Activated naive CD4-positive, alpha-beta T cell treated with anti-CD3 and anti-CD28 coated beads for 36 hours (primary cell): ENCODE measurements at regions of chr11 and their contacts with region 1.

Region 1: DNA sequence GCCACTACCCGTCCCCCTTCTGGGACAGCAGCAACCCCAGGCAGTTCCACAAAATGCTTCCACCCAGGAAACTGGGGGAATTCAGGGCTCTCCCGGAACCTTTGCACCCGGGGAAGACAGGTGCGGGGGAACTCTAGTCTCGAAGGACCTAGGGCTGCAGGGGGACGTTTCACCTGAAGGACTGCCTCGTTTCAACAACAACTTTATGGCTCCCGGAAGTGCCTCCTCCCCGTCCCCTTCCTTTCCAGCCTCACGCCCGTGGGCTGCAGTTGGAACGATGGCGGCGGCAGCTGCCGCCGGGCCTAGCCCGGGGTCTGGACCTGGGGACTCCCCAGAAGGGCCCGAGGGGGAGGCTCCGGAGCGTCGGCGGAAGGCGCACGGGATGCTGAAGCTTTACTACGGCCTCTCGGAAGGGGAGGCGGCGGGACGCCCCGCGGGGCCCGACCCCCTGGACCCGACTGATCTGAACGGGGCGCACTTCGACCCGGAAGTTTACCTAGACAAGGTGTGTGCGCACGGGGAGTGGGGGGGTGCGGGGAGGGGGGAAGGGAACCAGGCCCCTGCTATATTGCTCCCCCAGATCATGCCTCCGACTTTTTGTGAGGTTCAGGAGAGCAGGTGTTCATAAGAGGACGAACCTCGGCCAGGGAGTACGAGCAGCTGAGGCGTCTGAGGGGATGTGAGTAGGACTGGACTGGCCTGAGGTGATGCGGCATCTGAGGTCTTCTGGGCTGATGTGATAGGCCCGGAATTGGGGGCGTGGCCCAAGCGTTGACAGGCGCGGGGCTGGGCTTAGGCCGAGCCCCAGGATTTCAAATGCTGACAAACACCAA is at the start of gene VPS51:
- DNase-seq: peak; percentile 90
- H3K4me3 Mint-ChIP-seq: peak within 1 kb of the TSS; percentile 94
- H3K27ac Mint-ChIP-seq: peak within 1 kb of the TSS; percentile 95
- H3K4me1 Mint-ChIP-seq: peaks cover 17% of the 10 kb centered on the region
- H3K27me3 Mint-ChIP-seq: no peaks in the 10 kb centered on the region
- total RNA-seq, gene VPS51: 90.8 to 96.0 TPM

Region 2: DNA sequence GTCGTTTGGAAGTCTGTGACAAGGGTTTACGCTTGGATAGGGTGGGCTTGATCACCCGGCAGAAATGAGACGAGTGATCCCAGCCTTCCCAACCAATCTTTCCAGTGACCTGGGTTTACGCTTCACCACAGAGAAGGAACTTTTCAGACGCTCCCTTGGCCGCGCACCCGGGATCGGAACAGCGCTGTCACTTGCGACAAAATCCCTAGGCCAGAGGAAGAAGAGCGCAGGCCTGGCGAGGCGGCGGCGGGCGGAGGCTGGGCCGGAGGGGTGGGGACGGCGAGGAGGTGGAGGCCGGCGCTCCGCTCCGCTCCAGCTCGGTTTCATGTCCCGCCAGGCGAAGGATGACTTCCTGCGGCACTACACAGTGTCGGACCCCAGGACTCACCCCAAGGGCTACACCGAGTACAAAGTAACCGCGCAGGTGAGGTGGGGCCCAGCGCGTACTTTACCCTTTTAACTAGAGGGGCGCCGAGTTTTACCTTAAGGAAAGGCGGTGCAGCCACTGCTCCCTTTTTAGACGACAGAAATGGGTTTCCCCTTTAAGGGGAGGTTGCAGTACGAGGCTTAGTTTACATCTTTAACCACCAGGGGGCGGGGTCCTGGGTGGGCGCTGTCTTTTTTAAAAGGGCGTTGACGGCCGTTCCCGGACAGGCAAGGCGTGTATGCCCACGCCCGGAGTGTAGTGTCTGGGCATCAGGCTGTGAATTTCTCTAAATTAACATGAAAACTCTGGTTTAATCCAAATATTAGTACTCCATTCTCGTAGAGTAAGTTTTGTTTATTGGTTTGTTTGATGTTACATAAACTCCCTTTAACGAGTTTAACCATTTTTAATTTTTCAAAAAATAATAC is 68.8 kb before region 1 on chr11 and contains the start of gene SNX15:
- CTCF ChIA-PET with region 1: no interaction called
- intact Hi-C with region 1: loop called (anchors 2 kb)
- DNase-seq: peak; percentile 95
- H3K4me3 Mint-ChIP-seq: peak within 1 kb of the TSS; percentile 79
- H3K27ac Mint-ChIP-seq: peak within 1 kb of the TSS; percentile 82
- H3K4me1 Mint-ChIP-seq: peaks cover 19% of the 10 kb centered on the region
- H3K27me3 Mint-ChIP-seq: no peaks in the 10 kb centered on the region
- total RNA-seq, gene SNX15: 8.9 to 9.4 TPM

Region 3: DNA sequence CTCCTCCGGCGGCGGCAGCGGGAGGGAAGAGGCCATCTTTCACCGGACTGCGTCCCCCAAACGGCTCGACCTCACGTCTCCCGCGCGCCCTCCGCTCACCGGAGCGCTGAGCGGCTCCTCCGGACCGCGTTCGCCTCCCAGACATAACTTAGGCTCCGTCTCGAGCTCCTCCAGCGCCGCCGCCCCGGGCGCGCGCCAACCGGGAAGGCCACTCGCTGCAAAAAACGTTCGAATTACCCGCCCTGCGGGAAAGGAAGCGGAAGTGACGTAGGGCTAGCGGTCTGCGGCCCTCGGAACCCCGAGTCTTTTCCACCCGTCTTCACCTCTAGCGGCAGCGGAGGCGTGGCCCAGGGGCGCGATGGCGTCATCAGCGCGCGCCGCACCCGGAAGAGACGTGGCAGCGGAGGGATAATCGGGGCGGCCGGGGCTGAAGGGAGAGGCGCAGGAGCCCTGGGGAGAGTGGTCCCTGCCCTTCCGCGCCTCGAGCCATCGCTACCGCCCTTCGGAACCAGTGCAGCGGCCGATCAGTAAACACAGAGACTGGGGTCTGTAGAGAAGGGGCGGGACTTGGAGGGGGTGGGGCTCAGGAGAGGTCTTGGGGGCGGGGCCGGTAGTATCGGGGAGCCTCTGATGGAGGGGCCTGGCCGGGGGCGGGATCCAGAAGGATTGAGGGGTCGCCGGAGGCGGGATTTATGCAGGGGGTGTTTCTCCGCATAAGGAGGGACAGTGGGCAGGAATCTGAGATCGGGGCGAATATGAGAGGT is 12.2 kb before region 1 on chr11 and contains the starts of genes CDCA5 and ZFPL1:
- CTCF ChIA-PET with region 1: interaction called, 6 read pairs
- intact Hi-C with region 1: loop called (anchors 1 kb)
- DNase-seq: peak; percentile 97
- H3K4me3 Mint-ChIP-seq: peak within 1 kb of the TSS; percentile 92
- H3K27ac Mint-ChIP-seq: peak within 1 kb of the TSS; percentile 97
- H3K4me1 Mint-ChIP-seq: peaks cover 39% of the 10 kb centered on the region
- H3K27me3 Mint-ChIP-seq: no peaks in the 10 kb centered on the region
- total RNA-seq, gene CDCA5: 169 to 174 TPM
- total RNA-seq, gene ZFPL1: 24.2 to 25.6 TPM

Region 4: GRCh38 chr11:65111744-65112414 is 15.7 kb after region 1 on chr11 and contains the start of gene TM7SF2:
- CTCF ChIA-PET with region 1: interaction called, 41 read pairs
- intact Hi-C with region 1: loop called (anchors 1 kb)
- DNase-seq: peak; percentile 96
- H3K4me3 Mint-ChIP-seq: peak within 1 kb of the TSS; percentile 80
- H3K27ac Mint-ChIP-seq: peak within 1 kb of the TSS; percentile 72
- H3K4me1 Mint-ChIP-seq: peaks cover 51% of the 10 kb centered on the region
- H3K27me3 Mint-ChIP-seq: no peaks in the 10 kb centered on the region
- total RNA-seq, gene TM7SF2: 10.9 to 11.9 TPM

Region 5: GRCh38 chr11:65134386-65135253 is 38.4 kb after region 1 on chr11 and contains the start of gene SYVN1:
- CTCF ChIA-PET with region 1: interaction called, 4 read pairs
- intact Hi-C with region 1: loop called (anchors 1 kb)
- DNase-seq: peak; percentile 92
- H3K4me3 Mint-ChIP-seq: peak within 1 kb of the TSS; percentile 99
- H3K27ac Mint-ChIP-seq: peak within 1 kb of the TSS; percentile 100
- H3K4me1 Mint-ChIP-seq: peaks cover 29% of the 10 kb centered on the region
- H3K27me3 Mint-ChIP-seq: no peaks in the 10 kb centered on the region
- total RNA-seq, gene SYVN1: 19.0 to 19.2 TPM

Region 6: DNA sequence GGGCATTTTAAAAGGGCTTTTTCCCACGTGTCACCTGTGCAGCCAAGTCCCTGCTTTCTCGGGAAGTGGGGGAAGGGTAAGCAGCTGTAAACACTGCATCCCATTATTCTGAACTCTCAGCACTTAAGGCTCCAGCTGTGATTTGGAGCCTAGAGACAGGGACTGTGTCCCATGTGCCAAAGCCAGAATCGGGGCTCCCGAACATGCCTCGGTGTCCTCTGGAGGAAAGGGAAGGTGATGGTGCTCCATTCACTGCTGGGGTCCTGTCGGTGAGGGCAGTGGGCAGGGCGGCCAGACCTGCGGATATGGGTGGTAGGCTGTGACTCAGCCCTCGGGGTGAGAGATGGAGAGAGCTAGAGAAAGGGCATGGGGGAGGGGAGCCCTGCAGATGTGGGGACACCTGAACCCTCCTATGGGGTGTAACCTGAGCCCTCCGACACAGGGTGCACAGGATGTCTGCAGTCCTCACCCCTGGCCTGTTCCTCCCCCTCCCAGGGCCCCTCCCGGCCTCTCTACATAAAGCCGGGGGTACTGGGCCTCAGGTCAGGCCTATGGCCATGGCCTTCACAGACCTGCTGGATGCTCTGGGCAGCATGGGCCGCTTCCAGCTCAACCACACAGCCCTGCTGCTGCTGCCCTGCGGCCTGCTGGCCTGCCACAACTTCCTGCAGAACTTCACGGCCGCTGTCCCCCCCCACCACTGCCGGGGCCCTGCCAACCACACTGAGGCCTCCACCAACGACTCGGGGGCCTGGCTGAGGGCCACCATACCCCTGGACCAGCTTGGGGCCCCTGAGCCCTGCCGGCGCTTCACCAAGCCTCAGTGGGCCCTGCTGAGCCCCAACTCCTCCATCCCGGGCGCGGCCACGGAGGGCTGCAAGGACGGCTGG is 117.4 kb after region 1 on chr11:
- CTCF ChIA-PET with region 1: no interaction called
- intact Hi-C with region 1: no loop called
- DNase-seq: no peak
- H3K4me3 Mint-ChIP-seq: no peak overlapping the region
- H3K27ac Mint-ChIP-seq: no peak overlapping the region
- H3K4me1 Mint-ChIP-seq: peaks cover 20% of the 10 kb centered on the region
- H3K27me3 Mint-ChIP-seq: no peaks in the 10 kb centered on the region